ENCODE measurements at regions of chr21 and their contacts with region 1.

Region 1: GRCh38 chr21:42220138-42220701 is 1.3 kb downstream of the ABCG1 start:
- DNase-seq: peak; percentile 73
- ATAC-seq: peak; percentile 86
- H3K4me3 Mint-ChIP-seq: peak overlapping the region; percentile 91
- H3K27ac Mint-ChIP-seq: peak overlapping the region; percentile 89
- H3K4me1 Mint-ChIP-seq: peaks cover 18% of the 10 kb centered on the region
- H3K27me3 Mint-ChIP-seq: no peaks in the 10 kb centered on the region

Region 2: GRCh38 chr21:42010524-42011495 is 209.4 kb before region 1 on chr21:
- POLR2A ChIA-PET with region 1: no interaction called
- DNase-seq: no peak
- ATAC-seq: peak; percentile 1
- H3K4me3 Mint-ChIP-seq: peak overlapping the region; percentile 79
- H3K27ac Mint-ChIP-seq: peak overlapping the region; percentile 99
- H3K4me1 Mint-ChIP-seq: peaks cover 19% of the 10 kb centered on the region
- H3K27me3 Mint-ChIP-seq: peaks cover 11% of the 10 kb centered on the region

Region 3: DNA sequence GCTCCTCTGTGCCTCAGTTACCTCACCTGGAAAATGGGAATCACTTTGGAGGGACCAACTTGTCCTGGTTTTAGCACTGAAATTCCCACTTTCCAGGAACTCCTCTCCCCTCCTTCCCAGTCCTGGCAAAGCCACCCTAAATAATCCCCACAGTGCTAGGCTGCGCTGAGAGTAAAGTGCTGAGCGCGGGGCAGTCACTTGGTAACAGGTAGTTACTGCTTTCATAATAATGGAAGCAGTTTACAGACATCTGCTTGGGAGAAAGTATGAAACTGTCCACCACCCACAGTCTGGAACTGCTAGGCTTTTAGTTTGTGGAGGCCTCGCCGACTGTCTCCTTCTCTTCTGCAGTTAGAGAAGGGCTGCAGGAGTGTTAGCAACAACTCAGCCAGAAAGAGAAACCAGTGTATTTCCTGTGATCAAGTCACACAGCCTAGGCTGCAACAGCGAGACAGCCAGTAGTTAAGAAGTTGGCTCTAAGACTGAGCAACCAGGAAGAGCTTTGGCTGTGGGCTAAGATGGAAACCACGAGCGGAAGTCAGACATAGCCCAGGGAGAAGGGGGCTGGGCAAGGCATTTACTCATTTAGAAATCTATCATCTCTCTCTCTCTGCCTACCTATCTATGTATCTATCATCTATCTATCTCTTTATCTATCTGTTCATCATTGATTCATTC is 32.1 kb before region 1 on chr21:
- POLR2A ChIA-PET with region 1: interaction called, 92 read pairs
- DNase-seq: peak; percentile 73
- ATAC-seq: peak; percentile 93
- H3K4me3 Mint-ChIP-seq: peak overlapping the region; percentile 61
- H3K27ac Mint-ChIP-seq: peak overlapping the region; percentile 97
- H3K4me1 Mint-ChIP-seq: peaks cover 68% of the 10 kb centered on the region
- H3K27me3 Mint-ChIP-seq: peaks cover 6% of the 10 kb centered on the region

Measured in activated naive CD8-positive, alpha-beta T cell treated with anti-CD3 and anti-CD28 coated beads, Interleukin-2, amount 10 ng/mL, durations not matched to agents 7 days and 5 days (primary cell).